GM10248 (cell line): ENCODE measurements at regions of chr6 and their contacts with region 1.

Region 1: DNA sequence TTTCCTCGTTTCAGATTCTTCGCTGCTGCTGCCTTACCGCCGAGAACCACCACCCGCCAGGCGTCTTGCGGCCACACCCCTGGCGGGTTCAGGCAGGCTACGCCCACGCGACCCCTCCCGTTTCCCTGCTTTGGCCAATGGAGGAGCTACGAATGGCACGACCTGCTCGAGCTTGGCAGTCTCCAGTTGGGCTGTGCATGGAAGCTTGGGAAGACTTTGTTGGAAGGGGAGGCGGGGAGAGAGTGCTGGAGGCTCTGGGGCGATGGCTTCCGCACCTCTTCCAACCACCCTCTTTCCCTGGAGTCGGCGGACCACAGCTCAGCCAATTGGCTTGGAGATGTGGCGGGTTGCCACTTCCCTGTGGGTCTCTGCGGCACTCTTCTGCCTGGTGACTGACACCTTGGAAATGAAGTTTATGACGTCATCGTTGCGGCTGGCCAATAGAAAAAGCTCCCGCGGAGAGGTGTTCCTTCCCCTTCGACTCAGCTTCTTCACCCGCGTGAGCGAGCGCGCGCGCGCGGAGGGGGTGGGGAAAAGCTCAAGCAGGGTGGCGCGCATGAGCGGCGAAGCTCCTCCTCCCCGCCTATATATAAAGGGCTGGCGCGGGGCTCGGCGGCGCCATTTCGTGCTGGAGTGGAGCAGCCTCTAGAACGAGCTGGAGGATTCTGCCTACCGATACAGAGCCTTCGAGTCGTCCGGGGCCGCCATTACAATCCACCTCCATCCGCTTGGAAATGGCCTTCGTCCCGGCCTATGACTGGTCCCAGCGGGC is 3.4 kb downstream of the BRD2 start:
- DNase-seq: peak; percentile 95
- CTCF ChIP-seq: no peak

Region 2: DNA sequence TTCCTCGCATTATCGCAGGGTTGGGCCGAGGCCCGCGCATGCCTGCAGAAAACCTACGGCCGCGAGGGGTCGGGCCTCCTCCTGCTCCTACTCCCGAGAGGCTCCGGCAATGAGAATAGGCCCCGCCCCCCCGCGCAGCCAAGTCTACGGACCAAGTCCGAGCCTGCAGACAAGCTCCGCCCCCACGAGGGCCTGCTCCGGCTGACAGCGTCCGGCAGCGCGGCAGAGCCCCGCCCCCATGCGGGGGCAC is 776.2 kb before region 1 on chr6:
- CTCF ChIA-PET with region 1: no interaction called
- POLR2A ChIA-PET with region 1: no interaction called
- DNase-seq: peak; percentile 98
- CTCF ChIP-seq: peak; percentile 22

Region 3: DNA sequence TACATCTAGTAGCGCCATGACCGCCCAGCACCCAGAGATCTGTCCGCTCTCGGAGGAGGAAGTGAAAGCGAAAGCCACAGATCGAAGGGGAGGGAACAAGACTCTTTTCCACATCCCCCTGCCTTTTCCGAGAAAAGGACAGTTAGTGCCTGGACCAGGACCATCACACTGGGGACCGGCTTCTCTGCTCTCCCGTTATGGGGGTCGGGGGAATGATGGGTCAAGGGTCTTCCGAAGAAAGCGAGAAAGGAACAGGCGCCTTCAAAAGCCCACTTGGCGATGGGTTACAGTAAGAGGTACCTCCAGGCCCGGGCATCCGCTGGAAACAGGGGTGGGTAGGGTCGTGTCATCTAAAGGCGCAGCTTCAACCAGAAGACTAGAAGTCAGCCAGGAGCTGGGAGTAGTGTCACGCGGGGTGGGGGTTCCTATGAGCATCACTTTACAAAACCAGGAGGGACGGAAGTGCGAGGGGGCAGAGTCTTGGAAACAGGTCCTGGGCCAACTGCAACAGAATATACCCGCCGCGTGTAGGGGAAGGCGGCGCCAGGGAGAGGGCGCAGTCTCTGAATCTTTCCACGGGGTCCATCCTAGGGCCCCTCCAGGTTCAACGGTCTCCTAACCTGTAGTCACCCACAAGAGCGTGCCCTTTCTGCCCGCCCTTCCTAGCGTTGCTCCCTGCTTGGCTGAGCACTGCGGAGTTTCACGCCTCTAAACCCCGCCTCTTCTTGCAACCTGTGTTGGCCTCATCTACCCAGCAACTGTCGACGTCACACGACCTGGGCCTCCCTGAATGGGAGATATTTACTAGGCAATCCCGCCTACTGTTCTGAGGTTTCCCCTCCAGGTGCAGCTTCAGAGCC is 127.6 kb before region 1 on chr6 and contains the start of gene PSMB8:
- CTCF ChIA-PET with region 1: interaction called, 23 read pairs
- POLR2A ChIA-PET with region 1: interaction called, 37 read pairs
- DNase-seq: peak; percentile 92
- CTCF ChIP-seq: no peak

Region 4: GRCh38 chr6:32894080-32895005 is 77.4 kb before region 1 on chr6:
- CTCF ChIA-PET with region 1: interaction called, 5 read pairs
- POLR2A ChIA-PET with region 1: interaction called, 41 read pairs
- DNase-seq: peak; percentile 100
- CTCF ChIP-seq: no peak

Region 5: GRCh38 chr6:32920715-32921114 is 51.1 kb before region 1 on chr6:
- CTCF ChIA-PET with region 1: no interaction called
- POLR2A ChIA-PET with region 1: interaction called, 11 read pairs
- DNase-seq: no peak
- CTCF ChIP-seq: no peak

Region 6: GRCh38 chr6:32947552-32948465 is 24.0 kb before region 1 on chr6:
- CTCF ChIA-PET with region 1: interaction called, 313 read pairs
- POLR2A ChIA-PET with region 1: interaction called, 219 read pairs
- DNase-seq: no peak
- CTCF ChIP-seq: peak; percentile 82

Region 7: DNA sequence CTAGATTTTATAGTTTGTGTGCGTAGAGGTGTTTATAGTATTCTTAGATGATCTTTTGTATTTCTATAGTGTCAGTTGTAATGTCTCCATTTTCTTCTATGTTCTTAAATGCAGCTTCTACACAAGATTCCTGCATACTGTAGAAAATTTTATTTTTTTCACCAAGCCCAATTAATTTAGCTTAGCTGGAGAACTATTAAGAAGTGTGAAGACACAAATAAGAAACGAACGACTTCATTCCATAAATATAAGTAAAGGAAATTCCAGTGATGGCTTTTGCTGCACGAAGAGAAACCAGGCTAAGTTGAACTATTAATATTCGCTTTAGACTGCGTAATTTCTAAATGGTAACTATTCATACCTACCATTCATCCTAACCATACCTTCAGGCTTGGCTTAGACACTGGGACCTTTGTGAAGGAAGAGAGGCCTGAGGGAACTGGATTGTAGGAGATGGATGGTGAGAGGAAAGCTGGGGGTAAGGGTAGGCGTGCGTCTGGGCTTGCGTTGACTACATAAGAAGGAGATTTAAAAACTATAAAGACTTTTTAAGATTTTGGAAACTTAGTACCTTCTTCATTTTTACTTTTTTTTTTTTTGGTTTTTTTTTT is 21.7 kb after region 1 on chr6:
- CTCF ChIA-PET with region 1: interaction called, 4 read pairs
- POLR2A ChIA-PET with region 1: interaction called, 271 read pairs
- DNase-seq: no peak
- CTCF ChIP-seq: no peak

Region 8: DNA sequence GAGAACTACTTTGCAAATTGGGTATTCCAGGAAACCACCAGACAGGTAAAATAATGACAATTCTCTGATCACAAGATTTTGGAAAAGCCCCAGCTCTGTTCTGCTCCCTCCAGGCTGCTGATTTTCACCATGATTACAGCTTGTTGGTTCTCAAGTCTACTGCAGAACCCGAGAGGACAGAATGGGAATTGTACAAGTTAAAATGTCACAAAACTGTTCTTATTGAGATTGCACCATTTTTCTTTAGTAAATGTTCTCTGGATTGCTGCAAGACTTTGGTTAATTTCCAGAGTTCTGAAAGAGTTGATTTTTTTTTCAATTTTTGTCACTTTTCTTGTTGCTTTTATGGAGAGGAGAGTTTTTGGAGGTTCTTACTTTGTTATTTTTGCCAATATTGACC is 64.8 kb after region 1 on chr6:
- CTCF ChIA-PET with region 1: no interaction called
- POLR2A ChIA-PET with region 1: no interaction called
- DNase-seq: no peak
- CTCF ChIP-seq: no peak

Region 9: DNA sequence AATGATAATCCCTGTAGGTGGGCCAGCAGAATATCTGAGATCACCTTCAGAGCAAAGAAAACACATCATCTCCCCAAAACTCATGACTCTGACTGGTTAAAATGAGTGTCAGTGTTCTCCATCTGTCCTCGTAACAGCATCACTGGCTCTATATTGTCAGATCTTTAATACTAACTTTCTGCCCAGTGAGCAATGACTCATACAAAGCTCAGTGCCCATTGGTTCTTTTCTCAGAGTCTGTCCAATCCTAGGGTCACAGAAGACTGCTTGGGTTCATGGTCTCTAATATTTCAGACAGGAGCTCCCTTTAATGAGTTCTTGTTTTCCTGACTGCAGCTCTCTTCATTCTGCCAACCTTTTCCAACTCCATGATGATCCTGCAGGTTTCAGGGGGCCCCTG is 140.4 kb after region 1 on chr6:
- CTCF ChIA-PET with region 1: no interaction called
- POLR2A ChIA-PET with region 1: interaction called, 10 read pairs
- DNase-seq: peak; percentile 83
- CTCF ChIP-seq: no peak